ENCODE measurements at regions of chr18 and their contacts with region 1.

Region 1: GRCh38 chr18:658001-658946 is 821 bp downstream of the TYMS start:
- DNase-seq: peak; percentile 82
- ATAC-seq: peak; percentile 83
- H3K4me3 ChIP-seq: peak overlapping the region; percentile 85 to 96
- H3K27ac ChIP-seq: peak overlapping the region; percentile 100
- H3K4me1 ChIP-seq: peaks cover 9 to 22% of the 10 kb centered on the region in 2 experiments; a peak in 3 of 4 replicates
- H3K27me3 ChIP-seq: no peaks in the 10 kb centered on the region
- CTCF ChIP-seq: no peak
- POLR2A ChIP-seq: peak; percentile 49
- RAD21 ChIP-seq: no peak

Region 2: GRCh38 chr18:331221-331821 is 327.0 kb before region 1 on chr18:
- CTCF ChIA-PET with region 1: no interaction called
- POLR2A ChIA-PET with region 1: no interaction called
- RAD21 ChIA-PET with region 1: no interaction called
- intact Hi-C with region 1: no loop called
- DNase-seq: no peak
- ATAC-seq: no peak
- H3K4me3 ChIP-seq: no peak overlapping the region
- H3K27ac ChIP-seq: no peak overlapping the region
- H3K4me1 ChIP-seq: no peaks in the 10 kb centered on the region
- H3K27me3 ChIP-seq: no peaks in the 10 kb centered on the region
- CTCF ChIP-seq: no peak
- POLR2A ChIP-seq: no peak
- RAD21 ChIP-seq: no peak

Region 3: GRCh38 chr18:519019-519879 is 139.0 kb before region 1 on chr18:
- CTCF ChIA-PET with region 1: no interaction called
- POLR2A ChIA-PET with region 1: no interaction called
- RAD21 ChIA-PET with region 1: no interaction called
- intact Hi-C with region 1: no loop called
- DNase-seq: no peak
- ATAC-seq: no peak
- H3K4me3 ChIP-seq: no peak overlapping the region
- H3K27ac ChIP-seq: no peak overlapping the region
- H3K4me1 ChIP-seq: no peaks in the 10 kb centered on the region
- H3K27me3 ChIP-seq: no peaks in the 10 kb centered on the region
- CTCF ChIP-seq: no peak
- POLR2A ChIP-seq: no peak
- RAD21 ChIP-seq: no peak

Region 4: GRCh38 chr18:712401-713134 is 54.3 kb after region 1 on chr18 and contains the start of gene ENOSF1:
- CTCF ChIA-PET with region 1: no interaction called
- POLR2A ChIA-PET with region 1: no interaction called
- RAD21 ChIA-PET with region 1: no interaction called
- intact Hi-C with region 1: loop called (anchors 5 kb)
- DNase-seq: peak; percentile 54
- ATAC-seq: peak; percentile 98
- H3K4me3 ChIP-seq: peak within 1 kb of the TSS; percentile 65 to 82
- H3K27ac ChIP-seq: peak within 1 kb of the TSS; percentile 70
- H3K4me1 ChIP-seq: peaks cover 2 to 12% of the 10 kb centered on the region in 2 experiments; a peak in 3 of 4 replicates
- H3K27me3 ChIP-seq: no peaks in the 10 kb centered on the region
- CTCF ChIP-seq: peak; percentile 60 to 79 (median 63); a peak in 5 of 6 replicates
- POLR2A ChIP-seq: peak; percentile 58
- RAD21 ChIP-seq: peak; percentile 49; the same call in 1 of the 2 replicates
- total RNA-seq, gene ENOSF1: 90.0 TPM

Region 5: GRCh38 chr18:1062588-1062987 is 404.3 kb after region 1 on chr18:
- CTCF ChIA-PET with region 1: no interaction called
- POLR2A ChIA-PET with region 1: no interaction called
- RAD21 ChIA-PET with region 1: no interaction called
- intact Hi-C with region 1: no loop called
- DNase-seq: no peak
- ATAC-seq: no peak
- H3K4me3 ChIP-seq: no peak overlapping the region
- H3K27ac ChIP-seq: no peak overlapping the region
- H3K4me1 ChIP-seq: no peaks in the 10 kb centered on the region
- H3K27me3 ChIP-seq: peaks cover 5% of the 10 kb centered on the region; the same call in 1 of the 2 replicates
- CTCF ChIP-seq: 0 out of 6 replicates have a peak, but pooled peaks of 1 of the 3 experiments have one; percentile 4
- POLR2A ChIP-seq: no peak
- RAD21 ChIP-seq: no peak